Activated CD4-positive, alpha-beta memory T cell treated with anti-CD3 and anti-CD28 coated beads for 36 hours (primary cell): ENCODE measurements at regions of chr6 and their contacts with region 1.

Region 1: DNA sequence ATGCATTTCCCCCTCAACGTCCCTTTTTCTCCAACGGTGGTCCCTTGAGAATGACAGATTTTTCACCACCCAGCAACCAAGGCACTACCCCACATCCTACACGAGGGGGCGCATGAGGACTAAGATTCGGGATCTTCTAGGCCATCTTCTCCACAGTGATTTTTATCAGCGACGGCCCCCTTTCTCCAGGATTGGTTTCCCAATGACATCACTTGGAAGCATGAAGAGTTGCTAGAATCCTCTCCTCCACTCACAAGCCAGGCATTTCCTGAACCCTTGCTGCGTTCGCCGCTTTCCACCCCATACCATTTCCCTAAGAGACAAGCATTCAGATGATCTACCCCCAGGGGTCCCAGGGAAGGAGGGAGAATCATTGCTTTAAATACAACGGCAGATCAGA is 252.0 kb downstream of the HIVEP2 start:
- DNase-seq: peak; percentile 72
- H3K4me3 Mint-ChIP-seq: no peak overlapping the region
- H3K27ac Mint-ChIP-seq: no peak overlapping the region
- H3K4me1 Mint-ChIP-seq: peaks cover 15% of the 10 kb centered on the region
- H3K27me3 Mint-ChIP-seq: no peaks in the 10 kb centered on the region

Region 2: DNA sequence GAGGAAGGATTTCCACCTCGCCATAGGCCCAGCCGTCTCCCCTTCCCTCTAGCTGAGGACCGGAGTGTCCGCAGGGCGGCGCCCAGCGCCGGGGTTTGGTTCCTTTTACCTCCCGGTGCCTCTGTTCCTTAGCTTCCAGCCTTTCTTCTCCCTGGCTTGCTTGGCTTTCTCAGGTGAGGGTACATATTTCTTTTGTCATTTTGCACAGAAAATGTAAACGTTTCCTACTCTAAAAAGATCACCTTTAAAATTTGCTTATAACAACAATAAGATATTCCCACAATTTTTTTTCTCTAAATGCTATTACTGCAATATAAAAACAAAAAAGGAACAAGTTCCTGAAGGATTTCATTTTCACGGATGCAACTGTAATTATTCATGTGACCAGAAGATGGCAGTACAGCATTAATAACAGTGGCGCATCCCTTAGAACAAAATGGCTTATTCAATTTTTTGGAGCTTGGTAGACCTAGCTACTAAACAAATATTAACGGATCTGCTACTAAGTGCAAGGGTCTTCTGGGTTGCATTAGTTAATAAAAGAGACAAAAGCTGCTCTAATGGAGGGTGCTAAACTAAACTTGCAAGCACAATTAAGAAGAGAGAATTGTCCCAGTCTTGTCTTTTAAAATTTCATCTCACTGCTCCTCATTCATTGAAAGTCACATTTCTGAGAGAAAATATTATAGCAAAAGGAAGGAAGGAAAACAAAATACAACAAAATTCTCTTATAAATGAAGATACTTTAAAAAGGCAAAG is 218.2 kb before region 1 on chr6:
- CTCF ChIA-PET with region 1: interaction called, 11 read pairs
- POLR2A ChIA-PET with region 1: no interaction called
- intact Hi-C with region 1: no loop called
- DNase-seq: no peak
- H3K4me3 Mint-ChIP-seq: no peak overlapping the region
- H3K27ac Mint-ChIP-seq: no peak overlapping the region
- H3K4me1 Mint-ChIP-seq: no peaks in the 10 kb centered on the region
- H3K27me3 Mint-ChIP-seq: peaks cover 2% of the 10 kb centered on the region

Region 3: DNA sequence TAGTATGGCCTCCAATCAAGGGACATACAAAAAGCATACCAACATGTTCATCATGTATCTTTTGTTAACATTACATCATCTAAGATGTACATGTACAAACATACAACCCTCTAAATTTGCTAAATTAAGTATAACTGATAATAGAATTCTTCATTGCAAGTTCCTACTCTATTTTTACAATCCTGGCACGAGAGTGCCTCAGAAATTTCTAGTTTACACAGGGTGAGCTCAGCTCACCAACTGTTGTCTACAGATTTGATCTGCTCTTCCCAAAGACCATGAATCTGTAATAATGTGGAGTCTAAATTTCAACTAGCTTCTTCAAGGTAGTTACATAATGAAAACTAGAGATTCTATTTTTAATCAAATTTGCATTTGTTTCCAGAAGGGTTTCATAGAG is 72.4 kb after region 1 on chr6:
- CTCF ChIA-PET with region 1: no interaction called
- POLR2A ChIA-PET with region 1: no interaction called
- intact Hi-C with region 1: loop called (anchors 5 kb)
- DNase-seq: no peak
- H3K4me3 Mint-ChIP-seq: no peak overlapping the region
- H3K27ac Mint-ChIP-seq: no peak overlapping the region
- H3K4me1 Mint-ChIP-seq: peaks cover 48% of the 10 kb centered on the region
- H3K27me3 Mint-ChIP-seq: no peaks in the 10 kb centered on the region

Region 4: GRCh38 chr6:142845624-142846458 is 152.9 kb after region 1 on chr6:
- CTCF ChIA-PET with region 1: interaction called, 10 read pairs
- POLR2A ChIA-PET with region 1: no interaction called
- intact Hi-C with region 1: loop called (anchors 5 kb)
- DNase-seq: peak; percentile 65
- H3K4me3 Mint-ChIP-seq: peak overlapping the region; percentile 72
- H3K27ac Mint-ChIP-seq: peak overlapping the region; percentile 88
- H3K4me1 Mint-ChIP-seq: peaks cover 96% of the 10 kb centered on the region
- H3K27me3 Mint-ChIP-seq: no peaks in the 10 kb centered on the region

Region 5: DNA sequence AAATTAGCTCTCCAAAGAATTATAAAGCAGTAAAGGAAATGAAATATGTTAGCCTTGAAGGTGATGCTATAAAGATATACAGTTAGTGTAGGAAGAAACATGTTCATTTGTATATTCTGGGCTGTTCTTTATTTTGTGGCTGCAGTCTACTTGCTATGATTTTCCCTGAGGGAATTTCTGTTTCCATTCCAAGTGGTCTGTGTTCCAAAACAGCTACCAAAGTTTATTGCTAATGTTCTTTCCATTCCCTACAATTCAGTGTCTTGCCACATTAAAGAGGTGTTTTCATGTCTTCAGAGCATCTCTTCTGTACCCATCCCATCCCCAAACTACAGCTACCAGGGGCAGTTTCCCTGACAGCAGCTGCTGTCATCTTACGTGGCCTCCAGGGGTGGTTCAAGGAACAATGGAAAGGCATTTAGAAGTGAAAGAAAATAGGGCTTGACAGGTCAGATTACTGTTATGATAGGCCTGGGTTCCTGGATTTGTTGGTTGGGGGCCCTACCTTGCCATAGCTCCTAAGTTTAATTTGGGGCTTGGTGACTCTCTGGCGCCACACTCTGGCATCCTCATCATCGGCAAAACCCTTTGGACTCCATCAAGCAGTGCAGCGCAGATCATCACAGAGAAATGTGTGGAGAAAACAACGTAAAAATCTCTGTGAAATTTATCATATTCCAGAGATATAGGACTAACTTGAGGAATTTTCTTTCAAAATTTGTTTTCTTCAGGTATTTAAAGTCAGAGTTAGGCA is 333.9 kb after region 1 on chr6:
- CTCF ChIA-PET with region 1: interaction called, 93 read pairs
- POLR2A ChIA-PET with region 1: no interaction called
- intact Hi-C with region 1: loop called (anchors 1 kb)
- DNase-seq: peak; percentile 73
- H3K4me3 Mint-ChIP-seq: no peak overlapping the region
- H3K27ac Mint-ChIP-seq: no peak overlapping the region
- H3K4me1 Mint-ChIP-seq: peaks cover 6% of the 10 kb centered on the region
- H3K27me3 Mint-ChIP-seq: no peaks in the 10 kb centered on the region

Region 6: DNA sequence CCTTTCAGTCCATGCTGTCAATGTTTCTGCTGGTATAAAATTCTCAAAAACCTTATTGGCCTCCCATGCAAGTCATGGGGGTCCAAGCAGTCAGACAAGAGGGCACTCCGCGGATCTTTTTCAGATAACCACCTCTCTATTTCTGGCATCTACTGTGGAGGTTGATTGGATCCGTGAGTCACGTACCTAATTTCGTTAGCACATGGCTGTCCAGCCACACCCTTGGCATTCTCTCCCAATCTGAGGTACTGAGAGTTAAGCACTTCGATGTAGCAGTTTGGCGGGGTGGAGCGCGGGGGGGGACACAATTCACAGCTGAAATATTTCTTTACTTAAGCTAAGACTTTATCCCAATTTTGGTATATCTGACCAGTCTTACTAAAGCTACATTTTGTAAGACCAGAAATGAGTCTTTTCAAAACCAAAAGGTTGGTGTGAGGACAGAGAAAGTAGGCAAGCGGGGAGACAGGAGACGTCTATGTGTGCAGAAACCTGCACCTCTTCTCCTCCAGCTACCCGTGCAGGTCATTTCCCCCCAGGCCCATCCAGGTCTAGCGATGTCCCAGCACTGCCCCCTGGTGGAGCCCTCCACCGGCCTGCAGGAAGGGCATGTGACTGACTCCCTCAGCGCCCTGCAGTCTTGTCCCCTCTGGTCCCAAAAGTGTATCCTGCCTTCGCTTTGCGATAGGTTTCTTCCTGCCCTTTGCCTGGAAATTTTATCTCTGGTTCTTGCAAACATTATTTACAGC is 644.4 kb after region 1 on chr6:
- CTCF ChIA-PET with region 1: interaction called, 23 read pairs
- POLR2A ChIA-PET with region 1: no interaction called
- intact Hi-C with region 1: no loop called
- DNase-seq: peak; percentile 70
- H3K4me3 Mint-ChIP-seq: no peak overlapping the region
- H3K27ac Mint-ChIP-seq: no peak overlapping the region
- H3K4me1 Mint-ChIP-seq: peaks cover 7% of the 10 kb centered on the region
- H3K27me3 Mint-ChIP-seq: no peaks in the 10 kb centered on the region